ENCODE measurements at regions of chr19 and their contacts with region 1.

Region 1: GRCh38 chr19:2269244-2269947 is 12.6 kb downstream of the PEAK3 start:
- DNase-seq: peak; percentile 85
- ATAC-seq: peak; percentile 87
- H3K4me3 ChIP-seq: peak overlapping the region; percentile 97 to 98
- H3K27ac ChIP-seq: peak overlapping the region; percentile 98
- H3K4me1 ChIP-seq: peaks cover 22 to 48% of the 10 kb centered on the region in 2 experiments
- H3K27me3 ChIP-seq: no peaks in the 10 kb centered on the region
- CTCF ChIP-seq: peak in 1 of 3 experiments; percentile 7; a peak in 1 of 6 replicates
- POLR2A ChIP-seq: peak; percentile 96
- RAD21 ChIP-seq: no peak

Region 2: DNA sequence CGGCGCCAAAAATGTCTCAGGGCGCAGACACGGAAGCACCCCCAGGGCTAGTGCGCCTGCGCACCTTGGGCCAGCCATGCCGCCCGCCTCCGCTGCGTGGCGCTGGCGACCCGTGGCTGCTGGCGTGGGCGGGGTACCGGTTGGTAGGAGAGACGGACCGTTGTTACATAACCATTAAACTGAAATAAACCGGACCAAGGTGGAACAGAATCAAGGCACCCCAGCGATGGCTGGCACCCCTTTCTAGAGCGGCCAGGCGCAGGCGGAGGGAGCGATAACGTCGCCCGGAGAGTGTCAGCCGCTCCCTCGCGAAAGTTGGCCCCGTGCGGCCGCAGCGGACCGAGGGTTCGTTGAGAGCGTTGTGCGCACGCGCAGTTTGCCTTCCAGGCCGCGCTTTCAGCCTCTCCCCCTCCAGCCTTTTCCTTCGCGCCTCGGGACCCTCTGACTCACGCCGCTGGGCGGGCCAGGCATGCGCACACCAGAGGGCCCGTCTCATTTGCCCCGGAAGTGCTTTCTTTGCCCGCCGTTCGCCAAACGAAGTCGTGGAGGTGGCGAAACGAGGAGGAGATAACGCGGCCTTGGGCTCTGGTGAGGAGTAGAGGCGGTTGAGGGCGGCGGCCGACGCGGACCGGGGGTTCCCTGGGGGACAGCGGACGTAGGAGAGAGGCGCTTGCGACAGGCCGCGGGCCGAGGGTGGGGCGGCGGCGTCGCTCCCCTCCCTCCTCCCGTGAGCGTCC is 32.9 kb before region 1 on chr19 and contains the starts of genes PLEKHJ1 and SF3A2:
- CTCF ChIA-PET with region 1: no interaction called
- POLR2A ChIA-PET with region 1: interaction called, 3 read pairs
- RAD21 ChIA-PET with region 1: no interaction called
- intact Hi-C with region 1: loop called (anchors 1 kb)
- DNase-seq: peak; percentile 94
- ATAC-seq: peak; percentile 77
- H3K4me3 ChIP-seq: peak within 1 kb of the TSS; percentile 83 to 92
- H3K27ac ChIP-seq: peak within 1 kb of the TSS; percentile 95
- H3K4me1 ChIP-seq: peaks cover 17 to 49% of the 10 kb centered on the region in 2 experiments; a peak in 3 of 4 replicates
- H3K27me3 ChIP-seq: no peaks in the 10 kb centered on the region
- CTCF ChIP-seq: peak; percentile 87 to 98 (median 96)
- POLR2A ChIP-seq: peak; percentile 82
- RAD21 ChIP-seq: peak; percentile 97
- total RNA-seq, gene PLEKHJ1: 88.2 TPM
- total RNA-seq, gene SF3A2: 166 TPM

Region 3: DNA sequence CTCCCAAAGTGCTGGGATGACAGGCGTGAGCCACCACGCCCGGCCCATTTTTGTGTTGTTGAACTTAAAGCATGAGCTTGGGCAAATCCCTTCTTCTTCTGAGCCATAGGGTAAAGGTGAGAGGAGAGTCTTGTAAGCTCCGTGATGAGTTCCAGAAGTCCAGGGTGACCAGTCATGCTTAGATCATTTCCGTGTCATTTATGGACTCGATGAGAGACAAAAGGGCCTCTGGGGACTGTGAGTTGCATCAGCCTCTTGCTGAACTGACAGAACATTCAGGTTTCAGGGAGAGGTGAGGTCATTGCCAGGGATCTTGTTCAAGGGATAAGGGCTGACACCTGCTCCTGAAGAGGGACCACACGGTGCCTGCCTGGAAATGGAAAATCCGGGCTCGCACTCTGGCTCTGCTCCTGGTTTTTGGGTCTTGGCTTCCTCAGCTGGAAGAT is 260.1 kb after region 1 on chr19:
- CTCF ChIA-PET with region 1: no interaction called
- POLR2A ChIA-PET with region 1: no interaction called
- RAD21 ChIA-PET with region 1: no interaction called
- intact Hi-C with region 1: no loop called
- DNase-seq: peak; percentile 97
- ATAC-seq: peak; percentile 49
- H3K4me3 ChIP-seq: peak overlapping the region in 1 of 2 experiments; percentile 3; a peak in 1 of 4 replicates
- H3K27ac ChIP-seq: peak overlapping the region; percentile 7
- H3K4me1 ChIP-seq: peaks cover 61 to 88% of the 10 kb centered on the region in 2 experiments
- H3K27me3 ChIP-seq: no peaks in the 10 kb centered on the region
- CTCF ChIP-seq: no peak
- POLR2A ChIP-seq: no peak
- RAD21 ChIP-seq: no peak; the same call in 1 of the 2 replicates